Activated T-helper 2 cell treated with anti-CD3 and anti-CD28 coated beads, Interferon-gamma antibody, Interleukin-2, Interleukin-4, amounts not matched to agents 10 μg/mL and 5 μg/mL and 100 μg/mL, durations not matched to agents 14 hours and 24 hours and 36 hours (primary cell): ENCODE measurements at regions of chr5 and their contacts with region 1.

Region 1: DNA sequence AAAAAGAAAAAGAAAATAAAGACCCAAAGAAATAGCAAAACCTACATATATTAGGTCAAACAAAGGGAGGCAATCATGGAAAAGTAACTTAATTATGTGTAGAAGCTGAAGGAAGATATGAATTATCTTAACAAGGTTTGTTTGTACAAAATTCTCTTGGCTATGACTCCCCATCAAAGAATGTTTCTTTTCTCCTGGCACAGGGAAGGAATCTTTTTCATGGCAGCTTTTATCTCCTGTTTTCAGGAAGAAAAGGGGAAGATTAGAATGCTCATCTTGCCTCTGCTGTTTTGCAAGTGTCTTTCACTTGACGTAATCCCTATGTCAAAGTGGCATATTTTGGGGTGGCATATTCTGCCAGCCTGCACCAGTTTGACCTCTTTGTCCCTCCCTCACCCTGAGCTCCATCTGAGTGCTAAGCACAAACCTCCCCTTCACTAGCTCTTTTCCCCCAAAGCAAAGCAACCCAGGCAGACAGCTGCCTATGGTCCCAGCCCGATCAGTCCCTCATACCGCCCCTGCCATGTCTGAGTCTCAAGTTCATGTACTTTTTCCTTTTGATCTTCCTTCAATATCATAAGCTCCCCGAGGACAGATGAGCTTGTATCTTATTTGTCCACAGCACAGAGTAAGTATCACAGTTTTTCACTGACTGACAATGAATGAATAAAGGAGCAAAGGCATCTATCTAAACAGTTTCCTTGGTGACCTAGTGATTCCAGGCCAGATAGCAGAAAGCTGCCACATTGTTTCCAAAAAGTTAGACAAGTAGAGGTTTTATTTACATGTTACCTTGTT is 242.8 kb upstream of the ANKRD55 start:
- DNase-seq: no peak
- H3K4me3 Mint-ChIP-seq: no peak overlapping the region
- H3K27ac Mint-ChIP-seq: no peak overlapping the region
- H3K4me1 Mint-ChIP-seq: peaks cover 34% of the 10 kb centered on the region
- H3K27me3 Mint-ChIP-seq: no peaks in the 10 kb centered on the region

Region 2: DNA sequence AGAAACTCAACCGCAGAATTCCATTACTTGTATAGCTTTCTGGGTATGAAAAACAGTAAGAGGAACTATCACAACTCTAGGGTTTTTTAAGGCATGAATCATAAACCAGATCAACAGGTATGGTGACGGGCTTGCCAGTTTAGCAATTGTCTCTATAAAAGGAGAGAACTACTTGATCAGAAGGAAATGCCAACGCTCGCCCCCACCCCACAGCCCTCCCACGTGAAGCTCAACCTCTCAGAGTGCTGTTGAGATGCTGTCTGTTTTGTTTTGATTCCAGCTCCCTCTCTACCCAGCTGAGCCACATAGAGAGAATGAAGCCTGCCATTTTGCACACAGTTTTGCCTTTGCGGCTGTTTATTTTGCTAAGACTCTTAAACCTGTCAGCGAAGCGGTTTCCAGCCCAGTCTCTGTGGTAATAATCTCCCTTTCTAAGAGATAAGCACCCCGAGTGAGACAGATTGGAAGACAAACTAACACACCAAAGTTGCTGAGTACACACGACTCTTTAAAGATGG is 15.1 kb after region 1 on chr5:
- intact Hi-C with region 1: loop called (anchors 1 kb)
- DNase-seq: peak; percentile 34
- H3K4me3 Mint-ChIP-seq: peak overlapping the region; percentile 45
- H3K27ac Mint-ChIP-seq: peak overlapping the region; percentile 83
- H3K4me1 Mint-ChIP-seq: peaks cover 33% of the 10 kb centered on the region
- H3K27me3 Mint-ChIP-seq: no peaks in the 10 kb centered on the region